OCI-LY7 (cell line): ENCODE measurements at regions of chr4 and their contacts with region 1.

Region 1: DNA sequence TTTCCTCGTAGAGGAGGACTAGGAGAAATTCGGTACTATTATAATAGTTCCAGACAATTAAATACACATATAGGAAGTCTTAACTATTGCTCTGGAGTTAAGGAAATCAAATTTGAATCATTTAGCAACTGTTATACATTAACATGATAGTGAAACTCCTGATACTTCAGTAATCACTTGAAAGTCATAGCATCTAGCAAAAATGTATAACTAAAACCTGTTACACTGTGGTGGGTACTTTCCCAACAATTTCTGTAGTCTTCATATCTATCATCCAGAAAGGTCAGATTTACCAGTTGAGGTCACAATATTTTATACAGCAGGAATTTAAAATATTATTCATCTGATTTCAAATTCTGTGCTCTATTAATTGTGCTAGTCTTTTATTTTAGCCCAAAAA is 669.6 kb upstream of the PCDH10 start:
- DNase-seq: no peak
- H3K4me3 ChIP-seq: no peak overlapping the region
- H3K27ac ChIP-seq: no peak overlapping the region
- H3K4me1 ChIP-seq: no peaks in the 10 kb centered on the region
- CTCF ChIP-seq: no peak

Region 2: GRCh38 chr4:132493476-132493875 is 13.9 kb after region 1 on chr4:
- CTCF ChIA-PET with region 1: no interaction called
- POLR2A ChIA-PET with region 1: interaction called, 24 read pairs
- intact Hi-C with region 1: no loop called
- DNase-seq: no peak
- H3K4me3 ChIP-seq: no peak overlapping the region
- H3K27ac ChIP-seq: no peak overlapping the region
- H3K4me1 ChIP-seq: no peaks in the 10 kb centered on the region
- CTCF ChIP-seq: peak; percentile 61

Region 3: DNA sequence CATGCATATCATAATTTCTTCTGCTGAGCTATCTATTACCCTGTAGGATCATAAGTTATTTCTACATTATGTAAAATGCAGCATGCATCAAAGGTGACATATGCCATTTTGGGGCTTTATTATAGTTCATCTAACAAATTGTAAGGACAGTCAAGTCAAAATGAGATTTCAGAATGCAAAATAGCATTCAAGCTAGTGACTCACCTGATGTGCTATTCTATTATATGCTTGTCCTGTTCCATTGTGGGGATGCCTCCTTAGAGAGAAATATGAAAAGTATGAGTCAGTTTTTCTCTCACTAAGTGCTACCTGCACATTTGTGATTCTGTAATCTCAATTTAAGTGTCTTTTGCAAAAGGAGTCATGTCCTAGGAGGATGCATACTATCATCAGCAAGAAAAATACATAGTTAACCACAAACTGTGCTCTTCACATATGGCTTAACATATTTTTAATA is 22.6 kb after region 1 on chr4:
- CTCF ChIA-PET with region 1: no interaction called
- POLR2A ChIA-PET with region 1: interaction called, 11 read pairs
- intact Hi-C with region 1: no loop called
- DNase-seq: no peak
- H3K4me3 ChIP-seq: no peak overlapping the region
- H3K27ac ChIP-seq: peak overlapping the region; percentile 38
- H3K4me1 ChIP-seq: peaks cover 10% of the 10 kb centered on the region
- CTCF ChIP-seq: no peak